GM10248 (cell line): ENCODE measurements at regions of chr7 and their contacts with region 1.

Region 1: GRCh38 chr7:98106647-98107445 is at the start of gene LMTK2:
- DNase-seq: peak; percentile 99
- CTCF ChIP-seq: peak; percentile 96

Region 2: GRCh38 chr7:98119256-98119918 is 12.5 kb after region 1 on chr7:
- CTCF ChIA-PET with region 1: interaction called, 12 read pairs
- POLR2A ChIA-PET with region 1: interaction called, 3 read pairs
- DNase-seq: peak; percentile 1
- CTCF ChIP-seq: no peak